Calu3 (cell line): ENCODE measurements at regions of chr5 and their contacts with region 1.

Region 1: DNA sequence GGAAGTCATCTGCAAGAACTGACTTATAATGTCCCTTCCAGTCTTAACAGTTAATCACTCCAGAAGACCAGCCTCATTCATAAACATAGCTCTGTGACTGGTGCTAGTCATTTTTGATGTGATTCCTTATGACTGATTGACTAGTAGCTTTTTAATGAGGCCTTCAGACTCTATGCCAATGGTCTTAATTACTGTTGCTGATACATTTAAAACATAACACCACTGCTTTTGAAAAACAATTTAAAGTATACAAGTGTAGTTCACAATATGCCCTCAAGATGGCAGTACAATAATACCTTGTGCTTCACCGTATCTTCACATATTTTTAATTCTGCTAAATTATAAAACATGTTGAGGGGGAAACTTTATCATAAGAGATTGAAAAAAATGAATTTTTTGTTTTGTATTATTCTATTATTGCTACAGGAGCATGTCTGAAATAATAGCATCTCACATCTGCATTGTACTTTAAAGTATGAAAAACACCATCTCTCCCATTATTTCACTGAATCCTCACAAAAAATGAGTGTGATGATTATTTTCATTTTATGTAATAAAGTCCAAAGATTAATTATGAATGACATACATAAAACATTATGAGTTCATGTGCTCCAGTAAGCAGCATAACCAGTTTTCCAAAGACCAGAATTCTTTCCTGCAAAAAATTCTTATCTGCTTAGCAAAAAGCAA is 55.2 kb upstream of the SHISAL2B start:
- DNase-seq: no peak
- H3K4me3 Mint-ChIP-seq: no peak overlapping the region
- H3K27ac Mint-ChIP-seq: no peak overlapping the region
- H3K4me1 Mint-ChIP-seq: no peaks in the 10 kb centered on the region
- H3K27me3 Mint-ChIP-seq: peaks cover 16% of the 10 kb centered on the region
- CTCF ChIP-seq: peak; percentile 46

Region 2: DNA sequence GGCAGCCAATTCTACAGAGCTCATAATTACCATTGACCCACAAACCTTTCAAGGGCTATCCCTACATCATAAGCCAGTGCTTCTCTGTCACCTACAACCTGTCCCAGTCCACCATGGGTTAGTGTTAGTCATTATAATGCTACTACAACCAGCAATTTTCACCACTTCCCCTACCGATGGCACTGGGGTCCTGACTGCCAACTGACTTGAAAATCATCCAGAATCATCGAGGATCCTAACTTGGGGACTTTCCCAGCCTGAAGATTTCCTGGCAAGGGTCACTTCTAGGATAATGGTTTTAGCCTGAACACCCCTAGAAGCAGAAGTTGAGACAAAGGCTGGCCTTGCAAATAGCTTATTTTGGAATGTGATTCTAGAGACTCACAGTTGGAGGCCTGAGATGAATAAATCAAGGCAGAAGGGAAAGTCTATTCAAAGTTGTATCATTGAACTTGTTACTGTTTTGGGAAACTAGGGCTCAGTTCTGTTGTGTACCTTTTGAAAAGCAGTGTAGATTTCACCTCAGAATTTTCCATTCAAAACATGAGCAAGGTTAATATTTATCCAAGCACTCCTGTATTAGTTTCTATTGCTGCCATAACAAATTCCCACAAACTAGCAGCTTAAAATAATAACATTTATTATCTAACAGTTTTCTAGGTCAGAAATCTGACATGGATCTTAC is 1423.6 kb before region 1 on chr5:
- CTCF ChIA-PET with region 1: no interaction called
- intact Hi-C with region 1: no loop called
- DNase-seq: no peak
- H3K4me3 Mint-ChIP-seq: no peak overlapping the region
- H3K27ac Mint-ChIP-seq: no peak overlapping the region
- H3K4me1 Mint-ChIP-seq: no peaks in the 10 kb centered on the region
- H3K27me3 Mint-ChIP-seq: no peaks in the 10 kb centered on the region
- CTCF ChIP-seq: no peak

Region 3: DNA sequence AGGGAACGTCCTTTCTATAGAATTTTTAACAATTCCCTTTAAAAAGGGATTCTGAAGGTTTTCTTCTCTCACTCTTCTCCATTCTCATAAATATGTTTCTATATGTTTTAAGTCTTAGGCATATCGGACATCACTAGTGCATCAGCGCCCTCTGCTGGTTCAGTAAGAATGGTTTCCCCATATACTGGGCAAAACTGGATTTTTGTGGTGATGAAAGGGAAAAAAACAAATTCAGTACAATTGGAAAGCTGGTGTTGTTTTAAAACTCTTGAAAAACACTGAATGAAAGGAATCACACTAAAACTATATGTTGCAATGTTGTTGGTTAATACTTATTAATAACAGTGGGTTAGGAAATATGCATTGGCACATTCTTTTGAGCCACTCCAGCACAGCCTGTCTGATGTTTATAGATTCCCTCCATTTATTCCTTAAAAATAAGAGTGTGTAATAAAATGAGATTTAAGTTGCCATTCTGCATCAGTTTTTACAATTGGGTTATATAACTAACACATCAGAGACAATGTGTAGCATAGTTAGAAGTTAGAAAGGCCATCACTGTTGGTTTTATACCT is 149.4 kb after region 1 on chr5:
- CTCF ChIA-PET with region 1: no interaction called
- intact Hi-C with region 1: loop called (anchors 1 kb)
- DNase-seq: peak; percentile 68
- H3K4me3 Mint-ChIP-seq: no peak overlapping the region
- H3K27ac Mint-ChIP-seq: no peak overlapping the region
- H3K4me1 Mint-ChIP-seq: no peaks in the 10 kb centered on the region
- H3K27me3 Mint-ChIP-seq: no peaks in the 10 kb centered on the region
- CTCF ChIP-seq: peak; percentile 58